ENCODE measurements at regions of chr11 and their contacts with region 1.

Region 1: GRCh38 chr11:47248664-47249377 is at the start of gene ACP2:
- DNase-seq: peak; percentile 87 to 90 (median 87)
- H3K4me3 ChIP-seq: peak within 1 kb of the TSS; percentile 89 to 94
- H3K4me3 Mint-ChIP-seq: peak within 1 kb of the TSS; percentile 99 to 100 (median 99)
- H3K27ac ChIP-seq: peak within 1 kb of the TSS; percentile 75
- H3K27ac Mint-ChIP-seq: peak within 1 kb of the TSS; percentile 91 to 99 (median 99)
- H3K4me1 ChIP-seq: peaks cover 20% of the 10 kb centered on the region
- H3K4me1 Mint-ChIP-seq: peaks cover 12 to 29% (median 20%) of the 10 kb centered on the region in 4 donors
- H3K27me3 ChIP-seq: no peaks in the 10 kb centered on the region
- H3K27me3 Mint-ChIP-seq: no peaks in the 10 kb centered on the region
- total RNA-seq, gene ACP2: 23.6 to 23.7 TPM

Region 2: GRCh38 chr11:47233989-47234668 is 14.7 kb before region 1 on chr11:
- CTCF ChIA-PET with region 1: interaction called, 20 read pairs
- POLR2A ChIA-PET with region 1: interaction called, 43 read pairs
- intact Hi-C with region 1: no loop called
- DNase-seq: peak in 4 of 5 donors; percentile 11 to 61 (median 21)
- H3K4me3 ChIP-seq: no peak overlapping the region
- H3K4me3 Mint-ChIP-seq: peak overlapping the region; percentile 56 to 82 (median 70)
- H3K27ac ChIP-seq: peak overlapping the region; percentile 75
- H3K27ac Mint-ChIP-seq: peak overlapping the region; percentile 92 to 99 (median 97)
- H3K4me1 ChIP-seq: peaks cover 25% of the 10 kb centered on the region
- H3K4me1 Mint-ChIP-seq: peaks cover 7 to 32% (median 23%) of the 10 kb centered on the region in 4 donors
- H3K27me3 ChIP-seq: no peaks in the 10 kb centered on the region
- H3K27me3 Mint-ChIP-seq: no peaks in the 10 kb centered on the region

Region 3: GRCh38 chr11:47259178-47259977 is 10.6 kb after region 1 on chr11:
- CTCF ChIA-PET with region 1: interaction called, 28 read pairs
- POLR2A ChIA-PET with region 1: interaction called, 13 read pairs
- intact Hi-C with region 1: no loop called
- DNase-seq: peak in 1 of 5 donors; percentile 26
- H3K4me3 ChIP-seq: no peak overlapping the region
- H3K4me3 Mint-ChIP-seq: no peak overlapping the region
- H3K27ac ChIP-seq: no peak overlapping the region
- H3K27ac Mint-ChIP-seq: peak overlapping the region in 2 of 7 donors; percentile 19 to 37
- H3K4me1 ChIP-seq: peaks cover 9% of the 10 kb centered on the region
- H3K4me1 Mint-ChIP-seq: peaks cover 0 to 5% (median 4%) of the 10 kb centered on the region in 4 donors
- H3K27me3 ChIP-seq: no peaks in the 10 kb centered on the region
- H3K27me3 Mint-ChIP-seq: no peaks in the 10 kb centered on the region

Region 4: DNA sequence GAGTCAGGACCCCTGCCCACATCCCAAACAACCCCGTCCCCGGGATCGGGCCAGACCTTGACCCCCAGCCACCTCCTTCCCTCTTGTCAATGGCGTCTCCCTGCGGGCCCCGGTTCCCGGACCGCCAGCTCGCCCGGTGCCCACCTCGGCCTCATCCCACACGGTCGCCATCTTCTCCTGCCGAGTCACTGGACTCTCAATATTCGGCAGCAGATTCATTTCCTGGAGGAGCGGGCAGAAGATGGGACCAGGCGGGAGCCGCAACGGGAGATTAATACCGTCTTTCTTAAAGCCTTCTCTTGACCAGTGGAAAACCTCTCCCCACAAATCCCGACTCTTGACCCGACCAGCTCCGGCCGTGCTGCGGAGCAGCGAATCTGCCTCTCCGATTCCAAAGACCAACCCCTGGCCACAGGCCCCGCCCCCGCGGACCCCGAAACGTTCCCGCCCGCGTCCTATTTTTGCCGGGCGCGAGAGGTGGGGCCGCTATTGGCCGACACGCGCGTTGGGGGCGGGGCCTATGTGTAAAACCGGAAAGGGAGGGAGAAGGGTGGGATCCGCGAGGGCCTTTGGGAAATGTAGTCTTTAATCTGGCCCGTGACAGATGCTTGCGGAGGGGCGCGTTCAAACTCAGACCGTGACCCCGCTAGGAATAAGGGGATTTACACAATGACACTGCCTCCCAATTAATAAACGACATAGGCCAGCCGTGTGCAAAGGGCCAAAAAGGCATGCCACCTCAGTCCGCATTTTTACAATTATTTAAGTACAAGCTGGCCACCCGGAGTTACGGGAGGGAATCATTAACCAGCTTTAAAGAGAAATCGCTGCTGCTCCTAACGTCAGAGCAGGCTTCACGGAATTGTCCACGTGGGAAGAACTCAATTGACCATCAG is 177.5 kb after region 1 on chr11 and contains the start of gene PSMC3:
- CTCF ChIA-PET with region 1: no interaction called
- POLR2A ChIA-PET with region 1: interaction called, 8 read pairs
- intact Hi-C with region 1: loop called (anchors 1 kb)
- DNase-seq: peak; percentile 94 to 97 (median 96)
- H3K4me3 ChIP-seq: peak within 1 kb of the TSS; percentile 64 to 91
- H3K4me3 Mint-ChIP-seq: peak within 1 kb of the TSS; percentile 99 to 100 (median 100)
- H3K27ac ChIP-seq: peak within 1 kb of the TSS; percentile 85
- H3K27ac Mint-ChIP-seq: peak within 1 kb of the TSS; percentile 92 to 99 (median 99)
- H3K4me1 ChIP-seq: peaks cover 18% of the 10 kb centered on the region
- H3K4me1 Mint-ChIP-seq: peaks cover 12 to 32% (median 22%) of the 10 kb centered on the region in 4 donors
- H3K27me3 ChIP-seq: no peaks in the 10 kb centered on the region
- H3K27me3 Mint-ChIP-seq: no peaks in the 10 kb centered on the region
- total RNA-seq, gene PSMC3: 53.9 to 59.6 TPM

Region 5: GRCh38 chr11:47578524-47579460 is 330.0 kb after region 1 on chr11 and contains the starts of genes KBTBD4 and NDUFS3:
- CTCF ChIA-PET with region 1: no interaction called
- POLR2A ChIA-PET with region 1: interaction called, 3 read pairs
- intact Hi-C with region 1: loop called (anchors 5 kb)
- DNase-seq: peak; percentile 87 to 90 (median 88)
- H3K4me3 ChIP-seq: peak within 1 kb of the TSS; percentile 80 to 93
- H3K4me3 Mint-ChIP-seq: peak within 1 kb of the TSS; percentile 97 to 100 (median 100)
- H3K27ac ChIP-seq: peak within 1 kb of the TSS; percentile 83
- H3K27ac Mint-ChIP-seq: peak within 1 kb of the TSS; percentile 96 to 100 (median 100)
- H3K4me1 ChIP-seq: peaks cover 42% of the 10 kb centered on the region
- H3K4me1 Mint-ChIP-seq: peaks cover 19 to 48% (median 35%) of the 10 kb centered on the region in 4 donors
- H3K27me3 ChIP-seq: no peaks in the 10 kb centered on the region
- H3K27me3 Mint-ChIP-seq: peaks cover 0 to 1% of the 10 kb centered on the region in 2 donors
- total RNA-seq, gene KBTBD4: 21.2 to 22.5 TPM
- total RNA-seq, gene NDUFS3: 70.9 to 71.0 TPM

Measured in CD4-positive, alpha-beta memory T cell (primary cell).